Left ventricle myocardium superior (tissue), 1 donor: ENCODE measurements at regions of chr13 and their contacts with region 1.

Region 1: DNA sequence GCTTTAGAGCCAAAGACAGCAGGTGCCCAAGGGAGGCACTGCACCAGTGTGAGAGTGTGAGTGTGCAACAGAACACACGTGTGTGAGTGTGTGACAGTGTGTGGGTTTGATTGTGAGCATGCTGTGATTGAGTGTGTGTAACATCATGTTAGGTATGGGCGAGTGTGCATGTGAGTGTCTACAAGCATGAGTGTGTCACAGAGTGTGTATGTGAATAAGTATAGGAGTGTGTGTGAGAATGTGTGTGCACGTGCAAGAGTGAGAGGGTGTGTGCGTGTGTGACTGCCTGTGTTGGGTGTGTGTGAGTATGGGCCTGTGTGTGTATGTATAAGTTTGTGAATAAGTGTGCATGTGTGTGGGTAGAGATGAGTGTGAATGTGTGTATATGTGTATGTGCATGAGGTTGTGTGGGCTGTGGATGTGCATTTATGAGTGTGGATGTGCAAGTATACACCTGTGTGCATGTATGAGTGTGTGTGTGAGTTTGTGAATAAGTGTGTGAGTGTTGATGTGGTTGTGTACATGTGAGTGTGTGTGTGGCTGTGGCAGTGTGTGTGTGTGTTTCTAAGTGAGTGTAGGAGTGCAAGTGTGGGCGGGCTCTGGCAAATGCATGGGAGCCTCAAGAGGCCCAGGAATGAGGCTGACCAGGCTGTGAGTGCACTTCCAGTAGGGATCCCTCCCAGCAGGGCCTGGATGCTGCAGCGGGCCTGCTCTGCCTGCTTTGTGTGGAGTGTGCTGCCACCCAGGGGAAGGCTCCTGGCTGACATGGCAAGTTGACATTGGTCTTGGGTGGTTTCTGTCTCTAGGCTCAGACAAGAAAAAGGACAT is 198.4 kb downstream of the COL4A1 start:
- DNase-seq: peak; percentile 88
- ATAC-seq: peak; percentile 90

Region 2: DNA sequence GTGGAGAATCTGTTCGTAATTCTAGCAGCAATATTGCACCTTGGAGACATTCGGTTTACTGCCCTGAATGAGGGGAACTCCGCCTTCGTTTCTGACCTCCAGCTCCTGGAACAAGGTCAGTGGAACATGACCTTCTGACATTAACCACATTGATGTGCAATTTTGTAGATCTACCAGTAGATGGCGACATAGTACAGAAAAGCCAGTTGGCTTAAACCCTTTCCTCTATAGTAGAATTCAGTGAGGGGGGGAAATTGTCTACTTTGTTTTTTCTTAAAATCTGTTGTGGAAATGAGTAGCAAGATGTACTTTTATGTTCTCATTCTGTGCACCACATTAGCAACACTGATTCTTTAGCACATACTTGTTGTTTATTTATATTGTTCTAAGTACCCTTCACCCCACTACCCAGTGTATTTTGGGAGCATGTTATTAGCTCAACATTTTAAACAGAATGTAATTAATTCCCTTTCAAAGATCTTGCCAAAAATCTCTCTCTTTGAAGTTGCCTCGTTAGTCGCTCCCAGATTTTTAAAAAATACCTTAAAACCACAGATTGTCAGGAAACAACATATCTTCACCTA is 1146.9 kb before region 1 on chr13:
- intact Hi-C with region 1: loop called (anchors 5 kb)
- DNase-seq: no peak
- ATAC-seq: peak; percentile 87

Region 3: DNA sequence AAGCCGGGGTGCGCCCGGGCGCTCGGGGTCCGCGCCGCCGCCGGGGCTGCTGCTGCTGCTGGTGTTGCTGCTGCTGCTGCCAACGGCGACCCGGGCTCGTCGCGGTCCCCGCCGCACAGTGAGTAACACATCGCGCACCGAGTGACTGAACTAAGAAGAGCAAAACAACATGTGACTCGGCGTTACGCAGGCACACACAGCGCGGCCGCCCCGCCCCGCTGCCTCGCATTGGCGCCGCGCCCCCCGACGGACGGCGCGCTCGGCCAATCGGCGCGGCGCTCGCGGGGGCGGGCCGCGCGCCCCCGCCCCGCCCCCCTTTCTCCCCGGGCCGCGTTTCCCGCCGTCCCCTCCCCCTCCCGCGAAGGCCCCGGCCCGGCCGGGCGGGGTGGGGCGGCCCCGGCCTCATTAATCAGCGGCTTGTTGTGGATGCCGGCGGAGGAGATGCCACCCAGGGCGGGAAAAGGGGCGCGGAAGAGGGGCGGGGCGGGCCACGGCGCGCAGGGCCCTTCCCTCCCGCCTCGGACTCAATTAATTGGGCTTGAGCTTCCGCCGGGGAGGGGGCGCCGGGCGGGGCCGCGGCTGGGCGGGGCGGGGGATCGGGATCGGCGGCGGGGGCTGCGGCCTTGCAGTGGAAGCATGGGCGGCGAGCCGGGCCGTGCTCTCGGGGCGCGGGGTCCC is 322.0 kb before region 1 on chr13 and contains the start of gene IRS2:
- intact Hi-C with region 1: loop called (anchors 10 kb)
- DNase-seq: peak; percentile 95
- ATAC-seq: peak; percentile 76
- total RNA-seq, gene IRS2: 11.3 TPM

Region 4: GRCh38 chr13:109869312-109870237 is 239.0 kb before region 1 on chr13:
- intact Hi-C with region 1: loop called (anchors 5 kb)
- DNase-seq: peak; percentile 87
- ATAC-seq: peak; percentile 89

Region 5: GRCh38 chr13:109945206-109945960 is 163.2 kb before region 1 on chr13:
- intact Hi-C with region 1: no loop called
- DNase-seq: no peak
- ATAC-seq: no peak

Region 6: DNA sequence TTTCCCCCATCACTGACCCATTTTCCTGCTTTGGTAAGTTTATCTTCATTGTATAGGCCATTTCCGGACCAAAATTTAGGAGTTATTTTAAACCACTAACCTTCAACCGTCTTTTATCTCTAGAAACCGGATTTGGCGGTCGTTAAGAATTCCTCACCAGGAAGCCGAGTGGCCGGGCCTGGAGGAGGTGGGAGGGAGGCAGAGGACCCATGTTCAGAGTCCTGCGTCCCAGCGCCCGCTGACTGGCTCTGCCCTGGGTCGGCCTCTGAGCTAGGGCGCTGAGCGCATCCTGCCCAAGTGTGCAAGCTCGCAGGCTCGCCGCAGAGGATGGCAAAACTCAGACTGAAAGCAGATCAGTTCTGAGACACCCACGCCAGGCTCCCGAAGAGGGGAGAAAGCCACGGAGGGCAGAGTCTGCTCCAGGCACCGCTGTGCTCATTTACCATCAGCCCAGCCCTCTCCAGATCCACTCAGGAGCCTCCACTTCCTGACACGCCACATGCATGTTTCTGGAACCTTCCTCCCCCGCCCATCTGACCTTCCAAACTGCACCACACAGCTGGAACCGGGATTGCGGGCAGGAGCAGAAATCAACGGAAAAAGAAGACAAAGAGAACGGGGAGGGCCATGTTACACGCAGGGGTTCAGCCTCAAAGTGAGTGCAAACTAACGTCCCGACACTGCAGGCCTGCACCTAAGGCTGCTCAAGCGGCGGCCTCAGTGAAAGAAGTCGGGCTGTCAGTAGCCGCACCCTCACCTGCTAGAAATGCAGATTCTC is 190.1 kb after region 1 on chr13:
- intact Hi-C with region 1: no loop called
- DNase-seq: peak; percentile 58
- ATAC-seq: peak; percentile 58